ENCODE measurements at regions of chr18 and their contacts with region 1.

Region 1: DNA sequence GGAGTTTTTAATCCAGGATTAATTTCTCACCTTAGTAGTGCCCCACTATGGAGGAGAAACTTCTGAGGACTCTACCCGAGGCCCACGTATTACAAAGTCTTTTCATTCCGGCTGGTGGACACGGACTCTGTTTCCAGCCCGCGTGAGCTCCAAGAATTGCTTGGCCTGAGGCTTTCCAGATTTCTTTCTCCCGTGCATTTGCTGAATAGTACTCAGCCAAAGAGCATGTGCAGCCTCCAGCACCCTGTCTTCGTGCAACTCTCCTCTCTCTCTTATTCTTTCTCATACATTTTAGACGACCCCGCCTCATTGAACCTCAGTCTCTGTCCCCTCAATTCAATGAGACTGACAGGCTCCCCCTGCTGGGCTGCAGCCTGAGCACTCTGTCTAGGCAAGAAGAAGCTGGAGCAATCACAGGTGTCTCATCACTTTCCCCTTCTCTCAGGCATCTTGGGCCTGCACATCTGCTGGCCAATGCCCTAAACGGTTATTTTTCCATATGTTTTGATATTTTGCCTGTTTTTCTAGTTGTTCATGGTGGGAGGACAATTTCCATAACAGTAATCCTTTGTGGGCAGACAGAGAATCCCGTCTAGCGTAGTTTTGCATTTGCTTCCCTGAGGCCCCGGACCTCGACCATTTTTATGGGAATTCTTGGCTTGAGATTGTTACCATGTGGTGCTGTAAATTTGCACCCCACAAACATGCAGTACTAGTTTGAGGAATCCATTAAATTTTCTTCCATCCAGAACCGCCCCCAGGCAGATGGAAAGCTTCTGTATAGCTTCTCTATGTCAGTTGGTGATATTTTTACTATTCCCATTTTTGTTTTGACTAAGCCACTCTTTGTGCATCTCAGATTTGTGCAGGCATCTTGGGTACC is 50.1 kb upstream of the LPIN2 start:
- DNase-seq: peak in 1 of 2 experiments; percentile 83
- H3K4me3 ChIP-seq: no peak overlapping the region
- H3K27ac ChIP-seq: no peak overlapping the region
- H3K4me1 ChIP-seq: no peaks in the 10 kb centered on the region
- H3K27me3 ChIP-seq: no peaks in the 10 kb centered on the region
- CTCF ChIP-seq: peak; percentile 73 to 83 (median 82)
- EP300 ChIP-seq: no peak
- POLR2A ChIP-seq: no peak
- RAD21 ChIP-seq: peak; percentile 64 to 79

Region 2: GRCh38 chr18:2920546-2921343 is 142.3 kb before region 1 on chr18:
- CTCF ChIA-PET with region 1: no interaction called
- POLR2A ChIA-PET with region 1: no interaction called
- DNase-seq: no peak
- H3K4me3 ChIP-seq: no peak overlapping the region
- H3K27ac ChIP-seq: no peak overlapping the region
- H3K4me1 ChIP-seq: peaks cover 0 to 7% (median 4%) of the 10 kb centered on the region in 4 experiments; a peak in 3 of 7 replicates
- H3K27me3 ChIP-seq: no peaks in the 10 kb centered on the region
- CTCF ChIP-seq: no peak
- EP300 ChIP-seq: no peak
- POLR2A ChIP-seq: no peak
- RAD21 ChIP-seq: no peak

Region 3: GRCh38 chr18:2932247-2933181 is 130.5 kb before region 1 on chr18:
- CTCF ChIA-PET with region 1: interaction called, 19 read pairs
- POLR2A ChIA-PET with region 1: no interaction called
- DNase-seq: peak in 1 of 2 experiments; percentile 63
- H3K4me3 ChIP-seq: no peak overlapping the region
- H3K27ac ChIP-seq: no peak overlapping the region; the same call in 1 of the 2 replicates
- H3K4me1 ChIP-seq: peaks cover 2 to 6% (median 5%) of the 10 kb centered on the region in 4 experiments; a peak in 4 of 7 replicates
- H3K27me3 ChIP-seq: no peaks in the 10 kb centered on the region
- CTCF ChIP-seq: peak in 2 of 3 experiments; percentile 50 to 57; a peak in 2 of 4 replicates
- EP300 ChIP-seq: no peak
- POLR2A ChIP-seq: no peak
- RAD21 ChIP-seq: peak; percentile 76 to 80

Region 4: DNA sequence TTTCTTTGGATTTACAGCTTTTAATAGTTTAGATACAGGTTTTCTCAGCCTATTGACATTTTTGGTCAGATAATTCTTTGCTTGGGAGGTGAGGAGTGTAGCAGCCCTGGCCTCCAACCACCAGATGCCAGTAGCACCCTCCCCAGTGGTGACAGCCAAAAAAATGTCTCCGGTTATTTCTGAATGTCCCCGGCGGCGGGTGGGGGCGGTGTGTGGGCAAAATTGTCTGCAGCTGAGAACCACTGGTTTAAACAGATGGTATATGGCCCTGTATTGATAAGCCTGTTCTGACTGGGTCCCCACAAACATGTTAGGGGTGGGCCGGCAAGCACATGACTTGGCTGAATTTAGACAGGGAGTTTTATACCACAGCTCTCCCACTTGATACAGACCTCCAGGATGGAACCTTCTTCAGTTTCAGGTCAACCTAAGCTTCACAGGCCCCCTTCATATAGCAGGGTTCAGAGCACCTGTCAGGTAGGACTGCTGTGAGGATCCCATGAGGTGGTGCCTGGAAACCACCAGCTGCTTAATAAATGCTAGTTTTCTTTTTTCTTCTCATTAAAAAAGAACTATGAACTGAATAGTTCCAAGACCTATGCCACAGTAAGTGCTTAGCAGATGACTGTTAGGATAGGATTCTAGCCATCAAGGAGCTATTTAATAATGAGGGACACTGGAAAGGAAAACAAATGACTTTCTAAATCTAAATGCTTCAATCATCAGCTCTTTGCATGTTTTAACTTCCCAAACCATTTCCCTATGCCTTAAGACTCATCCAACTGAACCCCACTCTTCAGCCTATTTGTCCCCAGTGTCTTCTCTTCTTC is 68.2 kb before region 1 on chr18:
- CTCF ChIA-PET with region 1: interaction called, 47 read pairs
- POLR2A ChIA-PET with region 1: no interaction called
- DNase-seq: peak in 1 of 2 experiments; percentile 52
- H3K4me3 ChIP-seq: no peak overlapping the region
- H3K27ac ChIP-seq: no peak overlapping the region
- H3K4me1 ChIP-seq: peaks cover 2 to 14% (median 9%) of the 10 kb centered on the region in 4 experiments
- H3K27me3 ChIP-seq: no peaks in the 10 kb centered on the region
- CTCF ChIP-seq: peak; percentile 50 to 59 (median 50)
- EP300 ChIP-seq: no peak
- POLR2A ChIP-seq: no peak
- RAD21 ChIP-seq: peak; percentile 56 to 73; a peak in 3 of 4 replicates

Region 5: GRCh38 chr18:3074087-3074486 is 11.0 kb after region 1 on chr18:
- CTCF ChIA-PET with region 1: interaction called, 42 read pairs
- POLR2A ChIA-PET with region 1: no interaction called
- DNase-seq: no peak
- H3K4me3 ChIP-seq: no peak overlapping the region
- H3K27ac ChIP-seq: no peak overlapping the region
- H3K4me1 ChIP-seq: no peaks in the 10 kb centered on the region; a peak in 1 of 7 replicates
- H3K27me3 ChIP-seq: no peaks in the 10 kb centered on the region
- CTCF ChIP-seq: no peak
- EP300 ChIP-seq: no peak
- POLR2A ChIP-seq: no peak
- RAD21 ChIP-seq: no peak

Region 6: GRCh38 chr18:3119401-3120335 is 56.6 kb after region 1 on chr18:
- CTCF ChIA-PET with region 1: interaction called, 14 read pairs
- POLR2A ChIA-PET with region 1: no interaction called
- DNase-seq: no peak
- H3K4me3 ChIP-seq: no peak overlapping the region
- H3K27ac ChIP-seq: no peak overlapping the region
- H3K4me1 ChIP-seq: peaks cover 0 to 5% (median 2%) of the 10 kb centered on the region in 4 experiments; a peak in 3 of 7 replicates
- H3K27me3 ChIP-seq: no peaks in the 10 kb centered on the region
- CTCF ChIP-seq: no peak
- EP300 ChIP-seq: no peak
- POLR2A ChIP-seq: no peak
- RAD21 ChIP-seq: no peak

Region 7: GRCh38 chr18:3159830-3160229 is 96.8 kb after region 1 on chr18:
- CTCF ChIA-PET with region 1: no interaction called
- POLR2A ChIA-PET with region 1: no interaction called
- DNase-seq: no peak
- H3K4me3 ChIP-seq: no peak overlapping the region
- H3K27ac ChIP-seq: no peak overlapping the region
- H3K4me1 ChIP-seq: no peaks in the 10 kb centered on the region
- H3K27me3 ChIP-seq: no peaks in the 10 kb centered on the region; a peak in 1 of 7 replicates
- CTCF ChIP-seq: no peak
- EP300 ChIP-seq: no peak
- POLR2A ChIP-seq: no peak
- RAD21 ChIP-seq: no peak

Measured in H1 (cell line).